CD4-positive, alpha-beta memory T cell (primary cell): ENCODE measurements at regions of chr9 and their contacts with region 1.

Region 1: GRCh38 chr9:278651-279050 is 64.0 kb downstream of the DOCK8 start:
- DNase-seq: peak; percentile 48 to 73 (median 68)
- H3K4me3 ChIP-seq: peak overlapping the region in 1 of 2 donors; percentile 39
- H3K4me3 Mint-ChIP-seq: no peak overlapping the region
- H3K27ac ChIP-seq: peak overlapping the region; percentile 89
- H3K27ac Mint-ChIP-seq: no peak overlapping the region
- H3K4me1 ChIP-seq: peaks cover 91% of the 10 kb centered on the region
- H3K4me1 Mint-ChIP-seq: peaks cover 25 to 46% (median 35%) of the 10 kb centered on the region in 4 donors
- H3K27me3 ChIP-seq: no peaks in the 10 kb centered on the region
- H3K27me3 Mint-ChIP-seq: no peaks in the 10 kb centered on the region

Region 2: DNA sequence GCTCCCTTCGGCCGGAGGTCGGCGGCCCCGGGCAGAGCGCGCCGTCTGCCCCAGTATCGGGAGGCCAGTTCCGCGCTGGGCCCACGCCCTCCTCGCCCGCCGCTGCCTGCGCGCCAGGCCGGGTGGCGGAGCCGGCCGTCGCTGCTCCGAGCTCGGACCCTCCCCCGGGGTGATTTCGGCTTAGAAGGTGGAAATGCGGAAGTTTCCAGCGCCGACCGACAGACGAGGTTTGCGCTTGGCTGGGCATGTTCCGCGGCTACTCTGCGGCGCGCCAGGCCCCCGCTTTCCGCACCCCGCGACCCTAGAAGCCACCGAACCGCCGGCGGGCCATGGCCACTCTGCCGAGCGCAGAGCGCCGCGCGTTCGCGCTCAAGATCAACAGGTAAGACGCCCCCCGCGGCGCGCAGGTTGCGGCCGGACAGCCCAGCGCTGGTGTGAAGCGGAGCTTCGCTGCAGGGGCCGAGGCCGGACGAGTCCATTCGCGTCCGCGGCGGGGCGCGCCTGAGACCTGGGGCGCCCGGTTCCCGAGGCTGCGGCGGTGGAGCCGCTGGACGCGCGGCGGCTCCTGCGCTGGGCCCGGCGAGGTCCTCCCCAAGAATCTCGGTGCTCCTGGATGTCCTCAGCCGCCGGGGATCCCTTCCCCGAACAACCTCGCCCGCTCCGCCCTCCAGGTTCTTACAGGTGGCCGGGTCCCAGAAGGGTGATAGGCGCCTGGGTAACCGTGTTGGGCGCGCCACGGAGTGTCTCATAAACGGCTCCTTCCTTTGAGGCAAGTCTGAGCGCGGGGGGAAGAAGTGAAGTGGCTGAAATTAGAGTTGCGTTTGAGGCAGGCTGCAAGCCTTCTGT is 63.8 kb before region 1 on chr9 and contains the start of gene DOCK8:
- CTCF ChIA-PET with region 1: interaction called, 32 read pairs
- POLR2A ChIA-PET with region 1: interaction called, 192 read pairs
- intact Hi-C with region 1: loop called (anchors 1 kb)
- DNase-seq: peak; percentile 42 to 68 (median 55)
- H3K4me3 ChIP-seq: peak within 1 kb of the TSS; percentile 27 to 68
- H3K4me3 Mint-ChIP-seq: peak within 1 kb of the TSS; percentile 89 to 94 (median 92)
- H3K27ac ChIP-seq: peak within 1 kb of the TSS; percentile 48
- H3K27ac Mint-ChIP-seq: peak within 1 kb of the TSS; percentile 42 to 92 (median 84)
- H3K4me1 ChIP-seq: peaks cover 19% of the 10 kb centered on the region
- H3K4me1 Mint-ChIP-seq: peaks cover 11 to 29% (median 18%) of the 10 kb centered on the region in 4 donors
- H3K27me3 ChIP-seq: no peaks in the 10 kb centered on the region
- H3K27me3 Mint-ChIP-seq: no peaks in the 10 kb centered on the region
- total RNA-seq, gene DOCK8: 307 to 315 TPM

Region 3: DNA sequence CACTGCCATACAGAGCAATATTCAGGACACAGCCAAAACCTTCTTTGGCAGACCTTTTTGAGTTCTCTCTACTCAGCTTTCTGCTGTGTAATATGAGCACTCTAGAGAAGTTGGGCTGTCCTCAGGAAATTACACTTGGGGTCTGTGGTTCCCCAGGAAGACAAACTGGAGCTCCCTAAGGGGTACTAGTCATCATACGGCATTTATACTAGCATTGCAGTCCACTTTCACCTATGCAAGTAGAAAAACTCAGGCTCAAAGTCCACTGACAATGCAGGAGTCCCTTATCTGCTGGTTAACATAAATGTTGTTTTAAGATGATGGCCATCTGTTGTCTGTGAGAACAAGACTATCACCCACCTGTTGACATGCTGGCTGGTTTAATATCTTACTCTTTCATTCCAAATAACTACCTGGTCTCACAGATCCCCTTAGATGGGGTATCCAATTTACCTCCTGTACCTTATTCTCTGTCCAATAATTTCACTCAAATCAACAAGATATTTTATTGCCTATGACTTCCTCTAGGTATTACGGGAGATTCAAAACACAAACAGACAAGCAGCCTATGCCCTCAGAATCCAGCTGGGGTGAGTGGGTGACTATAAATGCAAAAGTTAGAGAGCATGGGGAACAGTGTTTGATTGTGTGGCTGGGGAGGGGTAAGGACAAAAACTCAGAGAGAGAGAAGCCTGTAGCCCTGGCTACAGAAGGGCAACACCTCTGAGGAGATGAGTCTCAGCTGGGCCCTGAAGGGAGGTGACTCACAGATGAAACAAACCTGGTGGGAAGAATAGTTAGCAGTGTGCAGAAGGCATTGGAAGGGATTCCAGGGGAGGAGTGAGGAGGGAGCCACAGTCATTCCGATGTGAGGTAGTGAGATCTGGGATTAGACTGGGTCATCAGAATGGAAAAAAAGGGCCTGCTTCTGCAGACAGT is 53.8 kb before region 1 on chr9:
- CTCF ChIA-PET with region 1: interaction called, 3 read pairs
- POLR2A ChIA-PET with region 1: interaction called, 17 read pairs
- intact Hi-C with region 1: no loop called
- DNase-seq: no peak
- H3K4me3 ChIP-seq: no peak overlapping the region
- H3K4me3 Mint-ChIP-seq: peak overlapping the region in 3 of 8 donors; percentile 18 to 37 (median 31)
- H3K27ac ChIP-seq: no peak overlapping the region
- H3K27ac Mint-ChIP-seq: peak overlapping the region in 2 of 7 donors; percentile 4 to 20
- H3K4me1 ChIP-seq: peaks cover 33% of the 10 kb centered on the region
- H3K4me1 Mint-ChIP-seq: peaks cover 16 to 33% (median 23%) of the 10 kb centered on the region in 4 donors
- H3K27me3 ChIP-seq: no peaks in the 10 kb centered on the region
- H3K27me3 Mint-ChIP-seq: no peaks in the 10 kb centered on the region

Region 4: GRCh38 chr9:292914-293313 is 14.3 kb after region 1 on chr9:
- CTCF ChIA-PET with region 1: interaction called, 3 read pairs
- POLR2A ChIA-PET with region 1: interaction called, 20 read pairs
- intact Hi-C with region 1: no loop called
- DNase-seq: no peak
- H3K4me3 ChIP-seq: no peak overlapping the region
- H3K4me3 Mint-ChIP-seq: peak overlapping the region in 2 of 8 donors; percentile 26 to 32
- H3K27ac ChIP-seq: no peak overlapping the region
- H3K27ac Mint-ChIP-seq: peak overlapping the region in 6 of 7 donors; percentile 1 to 92 (median 50)
- H3K4me1 ChIP-seq: peaks cover 43% of the 10 kb centered on the region
- H3K4me1 Mint-ChIP-seq: peaks cover 41 to 65% (median 54%) of the 10 kb centered on the region in 4 donors
- H3K27me3 ChIP-seq: no peaks in the 10 kb centered on the region
- H3K27me3 Mint-ChIP-seq: no peaks in the 10 kb centered on the region

Region 5: DNA sequence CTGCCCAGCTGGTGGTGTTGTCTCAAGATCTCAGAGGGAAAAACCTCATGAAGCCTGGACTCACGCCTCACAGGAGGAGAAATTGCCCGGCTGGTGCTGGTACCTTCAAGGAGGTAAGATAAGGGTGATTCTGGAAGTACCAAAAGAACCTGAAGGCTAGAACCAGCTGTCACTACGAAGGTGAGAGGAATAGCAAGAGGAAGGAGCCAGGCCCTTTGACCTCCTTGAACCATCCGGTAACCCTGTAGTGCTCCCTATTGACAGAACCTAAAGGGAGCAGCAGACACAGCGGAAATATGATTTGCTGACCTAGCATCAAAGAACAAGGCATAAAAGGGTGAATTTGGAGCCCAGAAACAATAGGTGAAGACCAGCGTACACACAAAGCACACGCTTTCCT is 28.2 kb after region 1 on chr9:
- CTCF ChIA-PET with region 1: interaction called, 3 read pairs
- POLR2A ChIA-PET with region 1: interaction called, 10 read pairs
- intact Hi-C with region 1: loop called (anchors 2 kb)
- DNase-seq: peak; percentile 50 to 70 (median 60)
- H3K4me3 ChIP-seq: no peak overlapping the region
- H3K4me3 Mint-ChIP-seq: no peak overlapping the region
- H3K27ac ChIP-seq: no peak overlapping the region
- H3K27ac Mint-ChIP-seq: peak overlapping the region; percentile 24 to 83 (median 78)
- H3K4me1 ChIP-seq: peaks cover 4% of the 10 kb centered on the region
- H3K4me1 Mint-ChIP-seq: peaks cover 18 to 34% (median 20%) of the 10 kb centered on the region in 4 donors
- H3K27me3 ChIP-seq: no peaks in the 10 kb centered on the region
- H3K27me3 Mint-ChIP-seq: no peaks in the 10 kb centered on the region

Region 6: GRCh38 chr9:592225-592624 is 313.6 kb after region 1 on chr9:
- CTCF ChIA-PET with region 1: no interaction called
- POLR2A ChIA-PET with region 1: no interaction called
- intact Hi-C with region 1: no loop called
- DNase-seq: no peak
- H3K4me3 ChIP-seq: no peak overlapping the region
- H3K4me3 Mint-ChIP-seq: no peak overlapping the region
- H3K27ac ChIP-seq: no peak overlapping the region
- H3K27ac Mint-ChIP-seq: no peak overlapping the region
- H3K4me1 ChIP-seq: no peaks in the 10 kb centered on the region
- H3K4me1 Mint-ChIP-seq: peaks cover 0 to 3% (median 0%) of the 10 kb centered on the region in 4 donors
- H3K27me3 ChIP-seq: no peaks in the 10 kb centered on the region
- H3K27me3 Mint-ChIP-seq: no peaks in the 10 kb centered on the region